ENCODE measurements at regions of chr3 and their contacts with region 1.

Region 1: DNA sequence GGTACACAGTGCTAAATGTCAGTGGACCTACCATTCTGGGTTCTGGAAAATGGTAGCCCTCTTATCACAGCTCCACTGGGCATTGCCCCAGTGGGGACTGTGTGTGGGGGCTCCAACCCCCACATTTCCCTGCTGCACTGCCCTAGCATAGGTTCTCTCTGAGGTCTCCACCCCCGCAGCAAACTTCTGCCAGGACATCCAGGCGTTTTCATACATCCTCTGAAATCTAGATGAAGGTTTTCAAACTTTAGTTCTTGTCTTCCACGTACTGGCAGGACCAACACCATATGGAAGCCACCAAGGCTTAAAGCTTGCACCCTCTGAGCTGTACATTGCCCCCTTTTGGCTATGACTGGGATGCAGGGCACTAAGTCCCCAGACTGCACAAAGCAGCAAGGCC is 788.2 kb upstream of the ALCAM start:
- DNase-seq: no peak
- H3K4me3 ChIP-seq: no peak overlapping the region
- H3K27ac ChIP-seq: no peak overlapping the region
- H3K4me1 ChIP-seq: no peaks in the 10 kb centered on the region
- H3K27me3 ChIP-seq: no peaks in the 10 kb centered on the region
- CTCF ChIP-seq: no peak
- EP300 ChIP-seq: no peak
- POLR2A ChIP-seq: no peak

Region 2: DNA sequence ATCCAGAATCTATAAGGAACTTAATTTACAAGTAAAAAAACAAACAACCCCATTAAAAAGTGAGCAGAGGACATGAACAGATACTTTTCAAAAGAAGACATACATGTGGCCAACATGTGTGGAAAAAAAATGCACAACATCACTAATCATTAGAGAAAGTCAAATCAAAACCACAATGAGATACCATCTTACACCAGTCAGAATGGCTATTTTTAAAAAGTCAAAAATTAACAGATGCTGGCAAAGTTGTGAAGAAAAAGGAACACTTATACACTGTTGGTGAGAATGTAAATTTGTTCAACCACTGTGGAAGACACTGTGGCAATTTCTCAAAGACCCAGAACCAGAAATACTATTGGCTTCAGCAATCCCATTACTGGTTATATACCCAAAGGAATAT is 41.8 kb before region 1 on chr3:
- intact Hi-C with region 1: no loop called
- DNase-seq: no peak
- H3K4me3 ChIP-seq: no peak overlapping the region
- H3K27ac ChIP-seq: no peak overlapping the region
- H3K4me1 ChIP-seq: no peaks in the 10 kb centered on the region
- H3K27me3 ChIP-seq: no peaks in the 10 kb centered on the region
- CTCF ChIP-seq: no peak
- EP300 ChIP-seq: no peak
- POLR2A ChIP-seq: no peak

Region 3: DNA sequence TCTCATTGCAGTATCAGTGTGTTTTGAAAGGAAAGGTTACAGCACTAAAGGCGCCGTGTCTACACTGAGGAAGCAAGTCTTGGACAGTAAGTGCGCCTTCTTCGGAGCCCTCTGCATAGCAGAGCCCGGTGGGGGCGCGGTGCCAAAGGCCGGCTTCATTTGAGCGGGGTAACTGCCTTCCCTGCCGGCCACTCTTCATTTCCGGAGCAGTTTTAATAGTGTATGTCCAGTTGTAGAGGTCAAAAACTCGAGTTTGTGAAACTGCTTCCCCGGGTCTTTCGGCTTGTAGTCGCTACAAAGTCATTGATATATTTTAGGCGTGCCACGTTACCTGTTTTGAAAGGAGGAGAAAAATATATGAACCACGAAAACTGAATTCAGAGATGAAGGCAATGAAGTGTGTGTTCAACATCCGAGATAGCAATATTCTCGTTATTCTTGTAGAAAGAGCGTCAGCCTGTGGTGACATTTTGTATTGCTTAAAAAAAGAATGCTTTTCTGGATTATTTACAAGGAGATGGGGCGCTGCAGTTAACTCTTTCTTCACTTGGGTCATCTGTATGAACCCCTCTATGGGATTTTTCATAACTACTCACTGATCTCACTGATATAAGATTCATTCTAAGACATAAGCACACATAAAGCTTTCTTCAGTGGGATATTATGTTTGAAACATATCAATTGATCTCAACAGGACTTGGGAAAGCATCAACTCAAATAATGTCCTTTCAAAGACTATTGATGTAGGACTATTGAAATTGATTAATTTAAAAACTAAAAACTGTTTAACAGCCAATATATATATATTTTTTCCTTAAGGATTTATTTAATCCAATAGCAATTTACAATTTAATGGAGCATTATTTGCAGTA is 791.2 kb after region 1 on chr3:
- intact Hi-C with region 1: loop called in 1 of 4 experiments (anchors 10 kb)
- DNase-seq: peak; percentile 79 to 87 (median 81)
- H3K4me3 ChIP-seq: peak overlapping the region; percentile 67
- H3K27ac ChIP-seq: peak overlapping the region in 1 of 2 donors; percentile 71
- H3K4me1 ChIP-seq: no peaks in the 10 kb centered on the region
- H3K27me3 ChIP-seq: no peaks in the 10 kb centered on the region
- CTCF ChIP-seq: peak; percentile 48 to 59 (median 50)
- EP300 ChIP-seq: no peak
- POLR2A ChIP-seq: no peak

Measured in ovary (tissue), 10 donors.